ENCODE measurements at regions of chr22 and their contacts with region 1.

Region 1: GRCh38 chr22:36775964-36776669 is at the start of gene IFT27:
- DNase-seq: peak; percentile 97
- H3K4me3 Mint-ChIP-seq: peak within 1 kb of the TSS; percentile 92
- H3K27ac Mint-ChIP-seq: peak within 1 kb of the TSS; percentile 94
- H3K4me1 Mint-ChIP-seq: peaks cover 36% of the 10 kb centered on the region
- H3K27me3 Mint-ChIP-seq: no peaks in the 10 kb centered on the region
- total RNA-seq, gene IFT27: 26.0 and 30.9 TPM in 2 replicates

Region 2: GRCh38 chr22:36506637-36507517 is 269.2 kb before region 1 on chr22 and contains the start of gene FOXRED2:
- intact Hi-C with region 1: loop called (anchors 1 kb)
- DNase-seq: peak; percentile 92
- H3K4me3 Mint-ChIP-seq: peak within 1 kb of the TSS; percentile 74
- H3K27ac Mint-ChIP-seq: no peak within 1 kb of the TSS
- H3K4me1 Mint-ChIP-seq: peaks cover 19% of the 10 kb centered on the region
- H3K27me3 Mint-ChIP-seq: no peaks in the 10 kb centered on the region
- total RNA-seq, gene FOXRED2: 22.3 and 25.0 TPM in 2 replicates

Region 3: DNA sequence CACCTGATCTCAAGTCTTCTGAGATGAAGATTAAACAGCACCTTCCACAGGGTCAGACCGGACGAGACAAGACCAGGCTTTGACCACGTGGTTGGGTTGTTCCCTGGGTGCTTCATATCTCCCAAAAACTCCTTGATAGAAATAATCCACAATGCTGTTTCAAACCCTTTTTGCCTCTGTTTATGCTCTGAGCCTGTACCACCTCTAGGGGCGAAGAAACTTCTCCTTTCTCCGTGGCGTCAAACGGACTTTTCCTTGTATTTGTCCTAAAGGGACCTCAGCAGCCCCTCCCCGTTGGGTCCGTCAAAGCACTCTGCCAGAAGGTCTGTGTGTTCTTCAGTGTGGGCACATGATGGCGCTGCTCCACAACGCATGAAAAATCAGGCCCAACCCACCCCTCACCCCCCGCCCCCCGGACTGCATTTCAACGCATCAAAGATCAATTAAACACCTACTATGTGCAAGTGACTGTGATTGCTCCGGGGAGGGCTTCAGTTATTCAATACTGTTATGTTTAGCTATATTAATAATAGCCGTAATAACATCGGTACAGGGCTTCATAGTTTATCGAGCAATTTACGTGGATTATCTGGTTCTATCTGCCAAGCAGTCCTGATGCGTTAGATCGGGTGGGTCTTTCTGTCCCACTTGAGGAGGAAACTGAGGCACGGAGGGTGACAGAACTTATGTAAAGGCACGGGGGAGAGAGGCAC is 229.9 kb before region 1 on chr22:
- intact Hi-C with region 1: loop called (anchors 1 kb)
- DNase-seq: peak; percentile 16
- H3K4me3 Mint-ChIP-seq: no peak overlapping the region
- H3K27ac Mint-ChIP-seq: no peak overlapping the region
- H3K4me1 Mint-ChIP-seq: peaks cover 29% of the 10 kb centered on the region
- H3K27me3 Mint-ChIP-seq: peaks cover 6% of the 10 kb centered on the region

Region 4: DNA sequence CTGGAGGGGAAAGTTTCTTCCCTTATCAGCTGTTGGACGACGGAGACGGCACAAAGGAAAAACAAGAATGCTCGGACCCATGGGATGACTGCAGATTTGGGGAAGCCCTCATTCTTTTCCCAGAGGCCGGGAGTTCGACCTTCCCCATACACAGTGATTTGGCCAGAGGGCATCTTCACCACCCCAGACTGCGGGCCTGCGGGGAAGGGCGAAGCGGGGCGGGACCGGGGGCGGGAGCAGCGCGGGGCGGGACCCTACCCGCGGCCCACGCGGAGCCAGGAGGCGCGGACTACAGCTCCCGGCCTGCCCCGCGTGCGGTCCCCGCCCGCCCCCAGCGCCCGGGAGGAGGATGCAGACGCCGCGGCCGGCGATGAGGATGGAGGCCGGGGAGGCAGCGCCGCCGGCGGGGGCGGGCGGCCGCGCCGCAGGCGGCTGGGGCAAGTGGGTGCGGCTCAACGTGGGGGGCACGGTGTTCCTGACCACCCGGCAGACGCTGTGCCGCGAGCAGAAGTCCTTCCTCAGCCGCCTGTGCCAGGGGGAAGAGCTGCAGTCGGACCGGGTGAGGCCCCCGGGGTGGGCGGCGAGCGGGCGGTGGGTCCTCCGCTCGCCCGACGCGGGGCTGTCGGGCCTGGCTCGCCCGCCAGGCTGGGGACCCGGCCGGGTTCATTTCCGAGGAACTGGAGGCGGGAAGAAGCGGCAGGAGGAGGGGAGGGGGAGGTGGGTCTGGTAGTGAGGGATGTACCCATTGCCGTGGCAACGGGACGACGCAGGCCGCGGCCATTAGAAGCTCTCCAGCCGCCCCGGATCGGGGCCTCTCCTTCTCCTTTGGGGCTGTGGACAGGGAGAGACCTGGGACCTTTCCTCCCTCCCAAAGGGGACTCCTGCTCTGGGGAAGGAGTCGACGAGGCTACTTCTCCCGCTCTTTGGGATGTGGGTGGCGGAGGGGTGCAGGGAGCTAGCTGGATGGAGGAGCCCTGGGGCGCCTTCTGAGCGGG is 275.6 kb after region 1 on chr22 and contains the start of gene KCTD17:
- intact Hi-C with region 1: loop called (anchors 1 kb)
- DNase-seq: peak; percentile 79
- H3K4me3 Mint-ChIP-seq: peak within 1 kb of the TSS; percentile 87
- H3K27ac Mint-ChIP-seq: peak within 1 kb of the TSS; percentile 74
- H3K4me1 Mint-ChIP-seq: peaks cover 9% of the 10 kb centered on the region
- H3K27me3 Mint-ChIP-seq: peaks cover 1% of the 10 kb centered on the region
- total RNA-seq, gene KCTD17: 65.4 and 68.1 TPM in 2 replicates

Region 5: GRCh38 chr22:37218771-37219411 is 442.8 kb after region 1 on chr22:
- intact Hi-C with region 1: loop called (anchors 1 kb)
- DNase-seq: peak; percentile 72
- H3K4me3 Mint-ChIP-seq: peak overlapping the region; percentile 79
- H3K27ac Mint-ChIP-seq: peak overlapping the region; percentile 96
- H3K4me1 Mint-ChIP-seq: peaks cover 68% of the 10 kb centered on the region
- H3K27me3 Mint-ChIP-seq: no peaks in the 10 kb centered on the region